Caco-2 (cell line): ENCODE measurements at regions of chr3 and their contacts with region 1.

Region 1: GRCh38 chr3:41961750-41962679 is at the start of gene ULK4:
- DNase-seq: peak; percentile 97 to 98
- H3K4me3 ChIP-seq: peak within 1 kb of the TSS; percentile 61
- H3K4me3 Mint-ChIP-seq: peak within 1 kb of the TSS; percentile 99
- H3K27ac Mint-ChIP-seq: peak within 1 kb of the TSS; percentile 98
- H3K4me1 ChIP-seq: peaks cover 5% of the 10 kb centered on the region; the same call in 1 of the 2 replicates
- H3K4me1 Mint-ChIP-seq: peaks cover 7% of the 10 kb centered on the region
- H3K27me3 ChIP-seq: no peaks in the 10 kb centered on the region
- H3K27me3 Mint-ChIP-seq: no peaks in the 10 kb centered on the region
- CTCF ChIP-seq: no peak
- total RNA-seq, gene ULK4: 4.2 and 4.6 TPM in 2 replicates

Region 2: DNA sequence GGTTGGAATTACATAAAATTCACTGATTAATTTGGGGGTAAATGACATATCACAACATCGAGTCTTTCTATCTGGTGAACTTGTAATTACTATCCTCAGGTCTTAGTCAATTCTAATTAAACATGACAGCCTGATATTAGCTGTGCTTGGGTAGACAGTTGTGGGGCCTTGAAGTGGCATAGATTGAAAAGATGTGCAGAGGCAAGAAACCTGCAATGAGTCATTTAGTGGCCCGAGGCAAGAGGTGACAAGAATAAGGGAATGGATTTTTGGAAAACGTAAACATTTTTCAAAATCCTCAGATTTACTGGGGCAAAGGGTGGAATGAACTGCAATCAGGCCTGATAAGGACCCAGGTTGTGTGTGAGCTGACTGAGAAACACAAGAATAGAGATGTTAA is 29.4 kb after region 1 on chr3:
- CTCF ChIA-PET with region 1: no interaction called
- POLR2A ChIA-PET with region 1: no interaction called
- intact Hi-C with region 1: loop called (anchors 1 kb)
- DNase-seq: peak; percentile 45 to 61
- H3K4me3 ChIP-seq: no peak overlapping the region
- H3K4me3 Mint-ChIP-seq: peak overlapping the region; percentile 5
- H3K27ac Mint-ChIP-seq: peak overlapping the region; percentile 30
- H3K4me1 ChIP-seq: peaks cover 32% of the 10 kb centered on the region
- H3K4me1 Mint-ChIP-seq: peaks cover 21% of the 10 kb centered on the region
- H3K27me3 ChIP-seq: no peaks in the 10 kb centered on the region
- H3K27me3 Mint-ChIP-seq: no peaks in the 10 kb centered on the region
- CTCF ChIP-seq: no peak

Region 3: DNA sequence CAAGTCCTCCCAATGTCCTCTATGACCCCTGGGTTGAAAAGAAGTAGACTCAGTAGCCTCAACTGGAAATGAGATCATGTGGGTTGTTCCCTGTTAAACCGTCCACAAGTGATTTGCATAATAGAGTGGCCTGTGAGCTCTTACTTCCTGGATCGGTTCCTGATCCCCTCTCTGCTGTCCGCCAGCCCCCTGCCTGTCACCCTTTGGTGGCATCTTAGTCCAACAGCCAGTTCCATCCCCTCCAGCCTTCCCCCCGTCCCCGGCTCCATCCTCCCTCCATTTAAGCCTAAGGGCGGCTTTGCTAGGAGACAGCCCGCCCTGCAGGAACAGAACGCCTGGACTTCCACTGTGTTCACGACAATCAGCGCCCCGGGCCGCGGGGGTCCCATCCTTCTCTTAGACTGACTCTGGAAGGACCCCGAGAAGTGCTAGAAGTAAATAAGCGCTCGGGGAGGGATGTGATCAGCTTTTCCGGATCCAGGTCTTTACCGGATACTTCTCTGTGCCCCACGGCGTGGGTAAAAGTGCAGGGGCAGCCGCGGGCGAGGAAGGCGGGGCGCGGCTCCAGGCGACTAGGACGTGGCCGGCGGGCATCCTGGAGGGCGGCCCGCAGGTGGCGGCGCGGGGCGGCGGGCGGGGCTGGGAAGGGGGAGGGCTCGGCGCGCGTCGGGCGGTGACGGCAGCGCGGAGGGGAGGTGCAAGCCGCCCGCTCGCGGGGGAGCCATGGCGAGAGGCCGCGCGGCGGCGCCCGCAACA is 51.1 kb after region 1 on chr3:
- CTCF ChIA-PET with region 1: no interaction called
- POLR2A ChIA-PET with region 1: no interaction called
- intact Hi-C with region 1: loop called (anchors 2 kb)
- DNase-seq: peak; percentile 59 to 76
- H3K4me3 ChIP-seq: peak overlapping the region; percentile 89
- H3K4me3 Mint-ChIP-seq: peak overlapping the region; percentile 81
- H3K27ac Mint-ChIP-seq: peak overlapping the region; percentile 72
- H3K4me1 ChIP-seq: 0 out of 2 replicates have a peak, but pooled peaks cover 9% of the 10 kb centered on the region
- H3K4me1 Mint-ChIP-seq: peaks cover 21% of the 10 kb centered on the region
- H3K27me3 ChIP-seq: no peaks in the 10 kb centered on the region; the same call in 1 of the 2 replicates
- H3K27me3 Mint-ChIP-seq: no peaks in the 10 kb centered on the region
- CTCF ChIP-seq: no peak

Region 4: DNA sequence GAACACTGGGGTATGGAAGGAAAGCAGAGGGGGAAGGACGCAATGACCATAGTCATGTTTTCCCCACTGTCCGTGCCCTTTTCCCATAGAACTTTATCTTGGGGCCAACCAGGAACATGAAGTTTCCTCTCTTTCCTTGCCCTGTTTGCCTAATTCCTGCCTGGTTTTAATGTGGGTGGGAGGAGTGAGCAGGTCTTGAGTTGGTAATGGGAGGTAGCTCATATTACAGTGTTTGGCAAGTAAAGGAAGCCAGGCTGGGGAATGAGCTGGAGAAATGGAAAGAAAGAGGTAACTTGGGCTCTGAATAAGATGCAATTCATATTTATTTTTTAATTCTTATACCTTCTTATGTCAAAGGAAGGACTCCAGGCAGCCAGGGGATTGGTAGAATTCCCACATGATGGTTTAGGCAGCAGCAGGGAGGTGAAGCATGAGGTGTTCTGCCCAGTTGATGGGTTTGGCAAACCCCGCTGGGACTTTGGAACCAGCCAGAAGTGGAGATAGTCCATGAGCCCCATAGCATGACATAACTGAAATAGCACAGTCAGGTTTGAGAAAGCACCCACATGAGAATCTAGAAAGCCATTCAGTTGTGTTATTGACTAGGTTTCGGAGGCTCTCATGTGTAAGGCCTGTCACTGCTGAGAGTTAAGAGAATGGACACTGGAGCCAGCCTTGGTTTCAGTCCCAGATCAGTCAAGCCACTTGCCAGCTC is 243.9 kb after region 1 on chr3:
- CTCF ChIA-PET with region 1: no interaction called
- POLR2A ChIA-PET with region 1: interaction called, 16 read pairs
- intact Hi-C with region 1: no loop called
- DNase-seq: no peak
- H3K4me3 ChIP-seq: no peak overlapping the region
- H3K4me3 Mint-ChIP-seq: no peak overlapping the region
- H3K27ac Mint-ChIP-seq: peak overlapping the region; percentile 61
- H3K4me1 ChIP-seq: peaks cover 8% of the 10 kb centered on the region
- H3K4me1 Mint-ChIP-seq: no peaks in the 10 kb centered on the region
- H3K27me3 ChIP-seq: no peaks in the 10 kb centered on the region
- H3K27me3 Mint-ChIP-seq: no peaks in the 10 kb centered on the region
- CTCF ChIP-seq: no peak

Region 5: GRCh38 chr3:42403737-42404136 is 441.7 kb after region 1 on chr3:
- CTCF ChIA-PET with region 1: no interaction called
- POLR2A ChIA-PET with region 1: no interaction called
- intact Hi-C with region 1: no loop called
- DNase-seq: no peak
- H3K4me3 ChIP-seq: no peak overlapping the region
- H3K4me3 Mint-ChIP-seq: no peak overlapping the region
- H3K27ac Mint-ChIP-seq: no peak overlapping the region
- H3K4me1 ChIP-seq: no peaks in the 10 kb centered on the region
- H3K4me1 Mint-ChIP-seq: no peaks in the 10 kb centered on the region
- H3K27me3 ChIP-seq: no peaks in the 10 kb centered on the region; the same call in 1 of the 2 replicates
- H3K27me3 Mint-ChIP-seq: no peaks in the 10 kb centered on the region
- CTCF ChIP-seq: no peak